WTC11 (cell line): ENCODE measurements at regions of chr2 and their contacts with region 1.

Region 1: DNA sequence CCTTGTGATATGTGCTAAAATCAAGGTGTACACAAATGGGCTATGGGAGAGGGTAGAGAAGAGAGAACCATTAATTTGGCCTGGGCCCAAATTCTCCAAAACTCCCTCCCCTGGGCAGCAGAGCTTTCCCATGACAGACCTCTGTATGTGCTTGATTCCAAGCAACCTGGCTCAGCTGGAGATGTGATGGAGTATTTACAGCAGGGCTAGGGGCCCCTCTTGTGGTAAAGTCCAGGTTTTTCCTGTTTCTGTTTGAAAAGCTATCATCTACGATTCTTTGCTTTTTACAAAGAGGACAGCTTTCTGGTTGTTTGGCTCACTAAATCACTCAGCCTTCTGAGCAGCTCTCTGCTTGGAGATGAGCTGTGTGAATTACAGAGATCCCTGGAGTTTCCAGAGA is 40.3 kb downstream of the KCNS3 start:
- DNase-seq: peak; percentile 25
- ATAC-seq: peak; percentile 73
- H3K4me3 Mint-ChIP-seq: no peak overlapping the region
- H3K27ac Mint-ChIP-seq: peak overlapping the region; percentile 84; the same call in 1 of the 2 replicates
- H3K4me1 Mint-ChIP-seq: peaks cover 45% of the 10 kb centered on the region
- H3K27me3 Mint-ChIP-seq: no peaks in the 10 kb centered on the region
- CTCF ChIP-seq: no peak

Region 2: GRCh38 chr2:17879101-17879912 is 39.5 kb before region 1 on chr2:
- CTCF ChIA-PET with region 1: interaction called, 30 read pairs
- POLR2A ChIA-PET with region 1: no interaction called
- DNase-seq: peak; percentile 87
- ATAC-seq: peak; percentile 74
- H3K4me3 Mint-ChIP-seq: peak overlapping the region; percentile 90
- H3K27ac Mint-ChIP-seq: peak overlapping the region; percentile 93
- H3K4me1 Mint-ChIP-seq: peaks cover 40% of the 10 kb centered on the region
- H3K27me3 Mint-ChIP-seq: peaks cover 31% of the 10 kb centered on the region
- CTCF ChIP-seq: no peak